Sigmoid colon (tissue), 7 donors: ENCODE measurements at regions of chr6 and their contacts with region 1.

Region 1: DNA sequence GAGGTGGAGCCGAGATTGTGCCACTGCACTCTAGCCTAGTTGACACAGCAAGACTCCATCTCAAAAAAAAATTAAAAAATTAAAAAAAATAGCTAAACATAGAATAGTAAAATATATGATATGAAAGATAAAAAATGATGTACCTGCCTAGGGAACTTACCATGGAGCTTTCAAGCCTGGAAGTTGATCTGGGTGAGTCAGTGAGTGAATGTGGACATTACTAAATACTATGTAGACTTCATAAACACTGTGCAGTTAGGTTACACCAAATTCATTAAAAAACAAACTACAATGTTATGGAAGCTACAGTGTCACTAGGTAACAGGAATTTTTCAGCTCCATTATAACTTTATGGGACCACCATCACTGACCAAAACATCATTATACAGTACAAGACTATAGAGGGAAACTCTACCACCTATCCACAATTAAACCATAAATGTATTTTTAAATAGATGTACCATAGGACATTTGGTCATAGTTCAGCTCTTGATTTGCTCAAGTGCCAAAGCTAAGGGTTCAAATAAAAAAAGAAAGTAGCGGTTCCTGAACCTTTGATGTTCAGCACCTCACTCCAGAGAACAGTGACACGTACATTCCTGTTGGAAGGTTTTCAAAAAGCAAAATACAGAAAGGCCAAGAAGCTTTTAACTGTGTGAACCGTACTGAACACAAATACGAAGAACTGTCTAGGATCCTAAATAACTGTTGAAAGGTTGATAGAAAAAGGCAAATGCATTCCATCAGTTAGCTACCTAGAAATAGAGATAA is 52.4 kb upstream of the SPDEF start:
- DNase-seq: no peak
- H3K4me3 ChIP-seq: no peak overlapping the region
- H3K27ac ChIP-seq: peak overlapping the region in 3 of 4 donors; percentile 51 to 62 (median 53)
- H3K4me1 ChIP-seq: peaks cover 0 to 29% (median 18%) of the 10 kb centered on the region in 4 donors
- H3K27me3 ChIP-seq: no peaks in the 10 kb centered on the region
- CTCF ChIP-seq: no peak
- EP300 ChIP-seq: no peak
- POLR2A ChIP-seq: no peak

Region 2: GRCh38 chr6:33720994-33721393 is 887.5 kb before region 1 on chr6:
- intact Hi-C with region 1: no loop called
- DNase-seq: no peak
- H3K4me3 ChIP-seq: no peak overlapping the region
- H3K27ac ChIP-seq: peak overlapping the region in 2 of 4 donors; percentile 4 to 73
- H3K4me1 ChIP-seq: peaks cover 0 to 41% (median 22%) of the 10 kb centered on the region in 4 donors
- H3K27me3 ChIP-seq: no peaks in the 10 kb centered on the region
- CTCF ChIP-seq: no peak
- EP300 ChIP-seq: no peak
- POLR2A ChIP-seq: no peak

Region 3: GRCh38 chr6:34169897-34170296 is 438.6 kb before region 1 on chr6:
- intact Hi-C with region 1: loop called (anchors 5 kb)
- DNase-seq: no peak
- H3K4me3 ChIP-seq: no peak overlapping the region
- H3K27ac ChIP-seq: no peak overlapping the region
- H3K4me1 ChIP-seq: no peaks in the 10 kb centered on the region
- H3K27me3 ChIP-seq: no peaks in the 10 kb centered on the region
- CTCF ChIP-seq: no peak
- EP300 ChIP-seq: no peak
- POLR2A ChIP-seq: no peak

Region 4: GRCh38 chr6:34196126-34196830 is 412.2 kb before region 1 on chr6:
- intact Hi-C with region 1: loop called (anchors 2 kb)
- DNase-seq: peak; percentile 92
- H3K4me3 ChIP-seq: peak overlapping the region; percentile 31 to 58 (median 50)
- H3K27ac ChIP-seq: no peak overlapping the region
- H3K4me1 ChIP-seq: peaks cover 0 to 11% (median 8%) of the 10 kb centered on the region in 4 donors
- H3K27me3 ChIP-seq: no peaks in the 10 kb centered on the region
- CTCF ChIP-seq: peak; percentile 85 to 98 (median 90)
- EP300 ChIP-seq: no peak
- POLR2A ChIP-seq: no peak

Region 5: DNA sequence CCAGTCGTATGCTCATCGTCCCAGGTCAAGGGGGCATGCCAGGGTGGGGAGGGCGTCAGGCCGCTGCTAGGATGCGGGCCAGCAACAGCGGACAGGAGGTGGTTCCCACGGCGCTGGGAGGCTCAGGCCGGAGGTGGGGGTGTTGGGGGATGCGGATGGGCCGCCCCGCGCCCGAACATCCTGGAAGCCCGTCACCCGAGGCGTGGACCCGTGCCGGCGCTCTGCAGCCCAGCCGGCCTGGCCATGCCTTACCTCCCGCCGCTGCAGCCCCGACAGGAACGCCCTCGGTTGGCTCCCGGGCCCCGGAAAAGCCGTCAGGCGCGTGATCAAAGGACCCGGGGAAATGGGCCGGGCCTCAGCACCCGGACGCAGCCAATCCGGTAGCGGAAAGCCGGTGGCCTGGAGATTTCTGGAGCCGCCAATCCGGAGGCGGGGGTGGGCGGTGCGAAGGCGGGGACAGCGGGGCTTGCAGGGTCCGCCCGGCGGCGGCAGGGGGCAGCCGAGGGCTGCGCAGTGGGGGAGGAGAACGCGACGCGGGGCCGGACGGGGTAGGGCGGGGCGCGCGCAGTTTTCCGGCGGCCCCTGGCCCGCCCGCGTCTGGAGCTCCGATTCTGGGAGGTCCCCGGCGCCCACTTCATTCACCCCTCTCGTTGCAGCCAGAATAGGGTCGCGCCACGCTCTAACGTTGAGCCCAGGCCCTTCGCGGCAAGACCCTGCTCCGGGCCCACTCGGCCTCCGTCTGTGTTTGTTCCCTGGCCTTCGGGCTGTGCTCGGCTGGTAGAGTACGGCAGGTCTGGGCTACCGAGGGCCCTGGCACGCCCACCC is 359.6 kb before region 1 on chr6 and contains the start of gene SMIM29:
- intact Hi-C with region 1: loop called (anchors 2 kb)
- DNase-seq: peak; percentile 99
- H3K4me3 ChIP-seq: peak within 1 kb of the TSS; percentile 74 to 91 (median 78)
- H3K27ac ChIP-seq: peak within 1 kb of the TSS; percentile 85 to 92 (median 90)
- H3K4me1 ChIP-seq: peaks cover 0 to 31% (median 25%) of the 10 kb centered on the region in 4 donors
- H3K27me3 ChIP-seq: no peaks in the 10 kb centered on the region
- CTCF ChIP-seq: peak; percentile 73 to 93 (median 83)
- EP300 ChIP-seq: peak in 1 of 4 donors; percentile 32
- POLR2A ChIP-seq: peak; percentile 59 to 68
- total RNA-seq, gene SMIM29: 16.8 to 34.3 (median 27.6) TPM

Region 6: GRCh38 chr6:34425498-34426410 is 182.8 kb before region 1 on chr6 and contains the start of gene RPS10:
- intact Hi-C with region 1: loop called (anchors 5 kb)
- DNase-seq: peak; percentile 97
- H3K4me3 ChIP-seq: peak within 1 kb of the TSS; percentile 56 to 81 (median 74)
- H3K27ac ChIP-seq: peak within 1 kb of the TSS; percentile 78 to 91 (median 86)
- H3K4me1 ChIP-seq: peaks cover 0 to 16% (median 11%) of the 10 kb centered on the region in 4 donors
- H3K27me3 ChIP-seq: no peaks in the 10 kb centered on the region
- CTCF ChIP-seq: no peak
- EP300 ChIP-seq: peak in 1 of 4 donors; percentile 3
- POLR2A ChIP-seq: peak; percentile 73 to 89
- total RNA-seq, gene RPS10: 2,556 to 7,534 (median 4,475) TPM

Region 7: GRCh38 chr6:34526992-34527728 is 81.3 kb before region 1 on chr6:
- intact Hi-C with region 1: loop called (anchors 1 kb)
- DNase-seq: peak; percentile 97
- H3K4me3 ChIP-seq: peak overlapping the region in 3 of 4 donors; percentile 6 to 35 (median 30)
- H3K27ac ChIP-seq: peak overlapping the region; percentile 39 to 67 (median 58)
- H3K4me1 ChIP-seq: peaks cover 0 to 13% (median 8%) of the 10 kb centered on the region in 4 donors
- H3K27me3 ChIP-seq: no peaks in the 10 kb centered on the region
- CTCF ChIP-seq: peak; percentile 58 to 73 (median 62)
- EP300 ChIP-seq: no peak
- POLR2A ChIP-seq: no peak